A549 (cell line): ENCODE measurements at regions of chr16 and their contacts with region 1.

Region 1: DNA sequence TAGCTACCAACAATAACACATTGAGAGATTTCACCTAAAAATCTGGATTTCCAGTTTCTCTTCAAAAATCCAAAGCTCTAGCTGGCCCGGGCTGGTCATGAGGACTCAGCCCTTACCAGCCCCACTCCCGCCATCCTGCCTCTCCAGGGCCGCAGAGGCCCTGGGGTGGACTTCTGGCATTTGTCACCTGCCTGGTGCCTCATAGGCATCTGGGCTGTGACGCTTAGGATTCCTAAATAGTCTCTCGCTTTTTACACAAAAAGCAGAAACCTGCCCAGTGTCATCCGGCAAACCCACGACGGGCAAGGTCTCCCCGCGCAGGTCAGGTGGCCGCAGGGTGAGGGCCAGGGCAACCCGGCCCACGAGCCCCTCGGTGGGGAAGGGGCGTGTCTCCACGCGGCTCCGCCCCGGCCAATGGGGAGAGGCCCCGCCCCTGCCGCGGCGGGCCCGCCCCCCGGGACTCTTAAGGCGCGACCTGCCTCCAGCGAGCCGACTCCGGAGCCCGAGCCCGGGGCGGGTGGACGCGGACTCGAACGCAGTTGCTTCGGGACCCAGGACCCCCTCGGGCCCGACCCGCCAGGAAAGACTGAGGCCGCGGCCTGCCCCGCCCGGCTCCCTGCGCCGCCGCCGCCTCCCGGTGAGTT is at the start of gene VASN:
- DNase-seq: peak; percentile 68 to 78
- ATAC-seq: peak; percentile 49 to 64
- H3K4me3 ChIP-seq: peak within 1 kb of the TSS; percentile 70
- H3K27ac ChIP-seq: peak within 1 kb of the TSS; percentile 74 to 94
- H3K4me1 ChIP-seq: peaks cover 61% of the 10 kb centered on the region
- CTCF ChIP-seq: no peak
- EP300 ChIP-seq: no peak
- POLR2A ChIP-seq: peak; percentile 98
- RAD21 ChIP-seq: no peak
- polyA plus RNA-seq, gene VASN: 2.0 and 2.3 TPM in 2 replicates

Region 2: DNA sequence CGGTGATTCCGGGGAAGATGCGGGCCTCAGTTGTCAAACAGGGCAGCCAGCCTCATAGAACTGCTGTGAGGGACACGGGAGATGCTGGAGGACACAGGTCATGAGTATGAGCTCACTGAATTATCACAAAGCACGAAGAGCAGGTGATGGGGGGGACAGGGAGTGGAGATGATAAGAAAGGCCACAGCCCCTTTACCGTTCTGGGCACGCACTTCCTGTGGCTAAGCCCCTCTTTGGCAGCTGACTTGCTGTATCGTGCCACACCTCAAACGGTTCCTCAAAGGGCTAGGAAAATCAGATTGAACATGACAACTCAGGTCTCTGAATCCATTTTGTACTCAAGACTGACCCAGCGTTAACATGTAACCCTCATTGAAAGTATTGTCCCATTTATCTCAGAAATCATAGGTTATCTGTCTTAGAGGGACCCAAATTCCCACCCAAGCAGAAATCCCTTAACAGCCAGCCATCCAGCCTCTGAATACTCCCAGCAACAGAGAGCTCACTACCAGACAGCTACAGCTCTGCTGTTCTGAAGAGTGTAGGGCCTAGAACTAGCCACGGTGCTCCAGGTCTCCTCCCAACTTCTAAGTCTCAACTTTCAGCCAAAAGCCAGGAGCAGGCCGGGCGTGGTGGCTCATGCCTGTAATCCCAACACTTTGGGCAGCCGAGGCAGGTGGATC is 124.6 kb before region 1 on chr16:
- CTCF ChIA-PET with region 1: no interaction called
- POLR2A ChIA-PET with region 1: no interaction called
- DNase-seq: no peak
- ATAC-seq: no peak
- H3K4me3 ChIP-seq: no peak overlapping the region
- H3K27ac ChIP-seq: no peak overlapping the region
- H3K4me1 ChIP-seq: no peaks in the 10 kb centered on the region
- CTCF ChIP-seq: no peak
- EP300 ChIP-seq: no peak
- POLR2A ChIP-seq: no peak
- RAD21 ChIP-seq: no peak

Region 3: DNA sequence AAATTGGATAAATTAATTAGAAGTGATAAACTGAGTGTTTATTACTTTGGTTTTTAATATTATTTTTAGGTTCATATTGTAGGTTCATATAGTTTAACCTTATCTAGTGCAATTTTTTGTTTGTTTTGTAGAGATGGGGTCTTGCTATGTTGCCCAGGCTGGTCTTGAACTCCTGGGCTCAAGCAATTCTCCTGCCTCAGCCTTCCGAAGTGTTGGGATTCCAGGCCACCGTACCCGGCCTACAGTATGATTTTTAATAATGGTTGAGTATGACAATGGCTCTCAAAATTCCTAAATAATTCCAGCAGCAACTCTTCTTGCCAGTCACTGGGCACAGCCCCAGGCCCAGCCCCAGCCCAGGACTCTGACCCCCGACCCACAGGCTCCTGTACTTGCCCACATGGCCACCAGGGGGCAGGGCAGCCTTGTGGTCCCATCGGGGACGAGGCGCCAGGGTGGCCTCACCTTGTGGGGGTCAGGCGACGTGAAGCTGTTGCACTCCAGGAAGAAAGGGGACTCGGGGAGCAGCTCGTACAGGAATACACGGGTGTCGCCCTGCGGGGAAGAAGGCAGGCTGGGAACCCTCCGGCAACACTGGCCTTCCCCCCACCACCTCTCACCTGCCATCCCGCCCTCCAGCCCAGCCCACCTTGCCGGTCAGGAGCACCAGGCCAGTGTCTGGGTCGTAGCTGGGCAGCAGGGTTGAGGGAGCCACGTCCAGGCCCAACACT is 12.5 kb before region 1 on chr16:
- CTCF ChIA-PET with region 1: interaction called, 63 read pairs
- POLR2A ChIA-PET with region 1: interaction called, 3 read pairs
- DNase-seq: peak; percentile 58 to 69
- ATAC-seq: peak; percentile 46 to 81; a peak in 5 of 6 replicates
- H3K4me3 ChIP-seq: no peak overlapping the region
- H3K27ac ChIP-seq: no peak overlapping the region
- H3K4me1 ChIP-seq: peaks cover 13% of the 10 kb centered on the region; the same call in 2 of the 3 replicates
- CTCF ChIP-seq: peak; percentile 85
- EP300 ChIP-seq: no peak
- POLR2A ChIP-seq: no peak
- RAD21 ChIP-seq: peak; percentile 92 to 94